Ascending aorta (tissue), 2 donors: ENCODE measurements at regions of chr19 and their contacts with region 1.

Region 1: GRCh38 chr19:19488875-19489690 is 26.3 kb downstream of the TSSK6 start:
- DNase-seq: peak; percentile 76 to 93
- H3K4me3 ChIP-seq: peak overlapping the region; percentile 13 to 41
- H3K27ac ChIP-seq: peak overlapping the region; percentile 86 to 96
- H3K4me1 ChIP-seq: peaks cover 15 to 28% of the 10 kb centered on the region in 2 donors
- H3K27me3 ChIP-seq: no peaks in the 10 kb centered on the region
- CTCF ChIP-seq: no peak

Region 2: GRCh38 chr19:19145684-19146608 is 343.1 kb before region 1 on chr19:
- intact Hi-C with region 1: loop called (anchors 1 kb)
- DNase-seq: peak; percentile 25 to 90
- H3K4me3 ChIP-seq: peak overlapping the region; percentile 28 to 53
- H3K27ac ChIP-seq: no peak overlapping the region
- H3K4me1 ChIP-seq: peaks cover 0 to 4% of the 10 kb centered on the region in 2 donors
- H3K27me3 ChIP-seq: no peaks in the 10 kb centered on the region
- CTCF ChIP-seq: peak; percentile 92 to 100 (median 97)

Region 3: GRCh38 chr19:19366612-19367396 is 122.3 kb before region 1 on chr19:
- intact Hi-C with region 1: loop called (anchors 1 kb)
- DNase-seq: peak in 1 of 2 donors; percentile 84
- H3K4me3 ChIP-seq: no peak overlapping the region
- H3K27ac ChIP-seq: no peak overlapping the region
- H3K4me1 ChIP-seq: peaks cover 0 to 2% of the 10 kb centered on the region in 2 donors
- H3K27me3 ChIP-seq: no peaks in the 10 kb centered on the region
- CTCF ChIP-seq: peak; percentile 91 to 95 (median 92)

Region 4: GRCh38 chr19:19385108-19385899 is 103.8 kb before region 1 on chr19:
- intact Hi-C with region 1: loop called (anchors 1 kb)
- DNase-seq: peak; percentile 100
- H3K4me3 ChIP-seq: peak overlapping the region; percentile 77 to 89
- H3K27ac ChIP-seq: peak overlapping the region; percentile 83 to 92
- H3K4me1 ChIP-seq: peaks cover 13 to 42% of the 10 kb centered on the region in 2 donors
- H3K27me3 ChIP-seq: no peaks in the 10 kb centered on the region
- CTCF ChIP-seq: peak in 2 of 3 experiments; percentile 28 to 29

Region 5: DNA sequence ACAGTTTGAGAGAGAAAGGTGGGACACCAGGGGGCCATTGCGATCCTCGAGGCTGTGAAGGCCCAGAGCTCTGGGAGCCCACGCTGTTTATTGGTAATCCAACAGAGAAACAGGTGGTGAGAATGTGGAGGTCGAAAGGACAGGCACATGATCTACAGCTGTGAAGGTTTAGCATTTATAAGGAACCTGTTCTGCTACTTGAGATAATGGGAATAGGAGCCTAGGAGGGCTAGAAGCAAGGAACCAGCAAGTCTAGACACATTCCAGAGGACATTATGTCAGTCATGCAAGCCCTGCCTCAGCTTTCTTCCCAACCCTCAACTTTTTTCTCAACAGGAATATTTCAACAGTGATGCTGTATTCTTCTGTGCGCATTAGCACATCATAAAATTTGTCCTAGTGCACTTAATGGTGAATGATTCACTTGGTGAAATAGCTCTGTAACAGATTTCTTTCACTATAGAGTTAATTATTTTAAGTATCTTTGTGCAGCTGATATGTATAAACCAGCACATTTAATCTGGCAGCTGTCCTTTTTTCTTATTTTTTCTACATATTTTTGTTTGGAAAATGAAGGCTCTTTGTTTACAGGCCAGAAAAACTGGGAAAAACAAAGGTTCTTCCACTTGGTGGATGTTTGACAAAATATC is 614.1 kb after region 1 on chr19:
- intact Hi-C with region 1: no loop called
- DNase-seq: no peak
- H3K4me3 ChIP-seq: no peak overlapping the region
- H3K27ac ChIP-seq: no peak overlapping the region
- H3K4me1 ChIP-seq: no peaks in the 10 kb centered on the region
- H3K27me3 ChIP-seq: no peaks in the 10 kb centered on the region
- CTCF ChIP-seq: no peak